ENCODE measurements at regions of chr15 and their contacts with region 1.

Region 1: GRCh38 chr15:68252925-68253534 is 23.5 kb upstream of the CLN6 start:
- DNase-seq: peak; percentile 62
- H3K4me3 Mint-ChIP-seq: no peak overlapping the region
- H3K27ac Mint-ChIP-seq: no peak overlapping the region
- H3K4me1 Mint-ChIP-seq: no peaks in the 10 kb centered on the region
- H3K27me3 Mint-ChIP-seq: peaks cover 3% of the 10 kb centered on the region

Region 2: DNA sequence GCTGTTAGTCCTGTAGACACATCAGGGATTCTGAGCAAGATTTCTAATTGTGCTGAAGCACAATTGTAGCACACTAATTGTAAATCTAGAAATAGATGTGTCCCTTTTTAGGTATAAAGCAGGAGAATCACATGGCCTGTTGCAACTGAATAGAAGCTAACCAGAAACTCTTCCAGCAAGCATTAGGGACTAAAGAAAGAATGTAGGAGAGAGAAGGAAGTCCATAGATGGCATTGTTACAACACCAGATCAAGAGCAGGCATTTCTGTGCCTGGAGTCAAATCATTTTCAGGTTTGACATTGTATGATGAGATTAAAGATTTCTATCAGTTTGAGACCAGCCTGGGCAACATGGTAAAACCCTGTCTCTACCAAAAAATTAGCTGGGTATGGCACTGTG is 75.3 kb before region 1 on chr15:
- CTCF ChIA-PET with region 1: no interaction called
- intact Hi-C with region 1: no loop called
- DNase-seq: no peak
- H3K4me3 Mint-ChIP-seq: no peak overlapping the region
- H3K27ac Mint-ChIP-seq: no peak overlapping the region
- H3K4me1 Mint-ChIP-seq: peaks cover 4% of the 10 kb centered on the region
- H3K27me3 Mint-ChIP-seq: no peaks in the 10 kb centered on the region

Region 3: DNA sequence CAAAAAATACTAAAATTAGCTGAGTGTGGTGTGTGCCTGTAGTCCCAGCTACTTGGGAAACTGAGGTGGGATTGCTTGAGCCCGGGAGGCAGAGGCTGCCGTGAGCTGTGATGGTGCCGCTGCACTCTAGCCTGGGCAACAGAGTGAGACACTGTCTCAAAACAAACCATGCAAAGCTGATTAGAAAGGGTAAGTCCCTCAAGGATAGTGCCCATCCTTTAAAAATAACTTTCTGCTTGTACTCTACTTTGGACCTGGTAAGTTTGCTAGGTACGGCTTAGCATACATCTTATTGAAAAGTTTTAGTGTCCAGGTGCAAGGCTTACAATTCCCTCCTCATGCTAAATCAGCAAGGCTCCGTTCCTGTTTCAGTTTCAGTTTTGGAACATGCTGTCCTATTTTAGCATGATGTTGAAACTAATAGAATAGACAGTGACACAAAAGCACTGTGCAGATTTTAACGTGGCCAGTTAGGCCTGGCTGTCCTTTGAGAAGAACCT is 45.9 kb after region 1 on chr15:
- CTCF ChIA-PET with region 1: interaction called, 16 read pairs
- intact Hi-C with region 1: loop called (anchors 2 kb)
- DNase-seq: peak; percentile 30
- H3K4me3 Mint-ChIP-seq: peak overlapping the region; percentile 64
- H3K27ac Mint-ChIP-seq: peak overlapping the region; percentile 65
- H3K4me1 Mint-ChIP-seq: peaks cover 25% of the 10 kb centered on the region
- H3K27me3 Mint-ChIP-seq: no peaks in the 10 kb centered on the region

Region 4: DNA sequence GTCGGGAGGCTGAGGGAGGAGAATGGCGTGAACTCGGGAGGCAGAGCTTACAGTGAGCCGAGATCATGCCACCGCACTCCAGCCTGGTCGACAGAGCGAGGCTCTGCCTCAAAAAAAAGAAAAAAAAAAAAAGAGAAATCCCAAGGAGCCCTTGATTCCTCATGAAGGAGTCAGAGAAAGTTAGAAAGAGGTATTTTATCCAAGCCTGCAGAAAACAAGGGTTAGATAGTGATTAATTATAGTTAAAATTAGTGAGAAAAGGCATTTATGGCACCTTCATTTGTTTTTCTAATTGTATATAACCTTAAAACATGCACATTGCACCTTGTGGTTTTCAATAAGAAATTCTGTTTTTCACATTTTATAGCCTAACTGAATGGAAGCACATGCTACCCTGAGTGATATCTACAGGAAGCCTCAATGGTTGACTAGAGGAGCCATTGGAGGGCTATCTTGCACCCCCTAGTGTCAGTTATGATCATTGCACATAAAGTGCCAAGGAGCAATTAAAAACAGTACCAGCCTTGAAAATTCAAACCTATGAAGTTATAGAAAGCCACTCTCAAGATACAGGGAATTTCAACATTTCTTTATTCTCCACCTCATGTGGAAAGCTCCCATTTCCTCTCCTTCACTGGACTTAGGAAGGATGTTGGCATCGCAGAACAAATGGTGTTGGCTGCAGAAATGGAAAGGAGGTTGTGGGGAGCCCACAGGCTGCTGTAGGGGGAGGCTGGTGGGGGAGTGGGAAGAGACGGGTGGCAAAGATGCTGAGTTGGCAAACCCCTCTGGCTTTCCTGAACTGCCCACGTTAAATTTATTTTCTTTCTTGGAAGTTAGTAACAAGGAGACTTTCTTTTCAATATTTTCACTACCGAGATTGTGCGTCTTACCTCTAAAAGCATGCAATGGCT is 130.4 kb after region 1 on chr15:
- CTCF ChIA-PET with region 1: interaction called, 10 read pairs
- intact Hi-C with region 1: loop called (anchors 1 kb)
- DNase-seq: peak; percentile 69
- H3K4me3 Mint-ChIP-seq: no peak overlapping the region
- H3K27ac Mint-ChIP-seq: no peak overlapping the region
- H3K4me1 Mint-ChIP-seq: peaks cover 13% of the 10 kb centered on the region
- H3K27me3 Mint-ChIP-seq: no peaks in the 10 kb centered on the region